ENCODE measurements at regions of chr9 and their contacts with region 1.

Region 1: DNA sequence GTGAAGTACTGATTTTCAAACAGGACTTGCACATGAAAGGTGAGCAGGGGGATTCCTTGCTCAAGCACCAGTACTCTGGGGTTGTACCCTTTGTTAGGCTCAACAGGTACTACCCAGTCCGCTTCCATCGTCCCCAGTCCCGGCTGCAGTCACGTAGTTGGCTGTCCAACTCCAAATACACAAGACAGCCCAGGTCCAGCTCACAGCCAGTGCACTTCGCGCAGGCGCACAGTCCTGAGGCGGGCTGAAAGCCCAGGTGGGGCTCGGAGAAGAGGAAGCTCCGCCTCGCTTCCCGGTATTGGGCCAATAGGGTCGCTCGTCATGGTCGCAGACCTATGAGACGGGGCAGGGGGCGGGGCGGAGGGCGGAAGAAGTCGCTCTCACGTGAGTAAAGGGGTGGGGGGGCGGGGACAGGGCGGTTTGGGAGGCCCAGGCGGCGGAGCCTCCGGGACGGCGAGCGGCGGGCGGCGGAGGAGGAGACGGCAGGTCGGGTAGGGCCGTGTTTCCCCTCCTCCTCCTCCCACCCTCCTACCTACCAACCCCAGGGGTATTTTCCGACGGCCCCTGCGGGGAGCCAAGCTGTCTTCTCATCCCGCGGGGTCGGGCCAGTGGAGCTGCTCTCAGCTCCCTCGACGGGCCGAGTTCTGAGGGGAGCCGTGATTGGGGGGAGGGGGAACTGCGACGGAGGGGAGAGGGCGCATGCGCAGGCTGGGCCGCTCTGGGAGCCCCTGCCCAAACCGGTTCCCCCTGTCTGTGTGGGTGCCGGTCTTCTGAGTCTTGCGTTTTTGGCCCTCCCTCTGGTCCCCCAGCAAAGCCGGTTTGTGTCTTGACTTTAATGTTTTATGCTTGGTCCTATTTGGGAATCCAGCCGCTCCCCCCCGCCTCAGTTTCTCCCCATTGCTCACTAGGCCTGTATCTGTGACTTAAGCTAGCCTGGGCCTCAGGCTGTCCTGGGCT is at the start of gene RABGAP1:
- DNase-seq: peak; percentile 94 to 99
- H3K4me3 ChIP-seq: peak within 1 kb of the TSS; percentile 89
- H3K27ac ChIP-seq: peak within 1 kb of the TSS; percentile 81
- H3K4me1 ChIP-seq: peaks cover 29% of the 10 kb centered on the region
- H3K27me3 ChIP-seq: no peaks in the 10 kb centered on the region
- CTCF ChIP-seq: no peak
- total RNA-seq, gene RABGAP1: 95.8 and 103 TPM in 2 replicates

Region 2: GRCh38 chr9:121902461-121903135 is 1038.3 kb before region 1 on chr9:
- CTCF ChIA-PET with region 1: no interaction called
- POLR2A ChIA-PET with region 1: no interaction called
- intact Hi-C with region 1: no loop called
- DNase-seq: no peak
- H3K4me3 ChIP-seq: no peak overlapping the region
- H3K27ac ChIP-seq: no peak overlapping the region
- H3K4me1 ChIP-seq: no peaks in the 10 kb centered on the region; the same call in 1 of the 2 replicates
- H3K27me3 ChIP-seq: no peaks in the 10 kb centered on the region
- CTCF ChIP-seq: no peak

Region 3: DNA sequence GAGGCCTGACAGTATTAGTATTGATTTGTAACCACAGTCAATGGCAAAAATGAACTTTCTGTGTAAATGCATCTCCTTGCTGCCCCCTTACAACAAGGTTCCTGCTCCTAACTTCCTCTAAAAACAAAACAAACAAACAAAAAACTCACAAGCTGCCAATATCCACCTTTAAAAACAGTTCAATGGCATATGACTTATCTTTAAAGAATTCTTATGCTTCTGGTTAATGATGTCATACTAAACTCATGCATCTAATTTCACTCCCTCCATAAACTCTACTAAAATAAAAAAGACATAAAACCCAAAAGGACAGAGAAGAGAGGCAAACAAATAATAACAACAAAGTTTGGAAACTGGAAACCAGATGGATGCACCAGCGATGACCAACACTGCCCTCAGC is 404.7 kb before region 1 on chr9:
- CTCF ChIA-PET with region 1: no interaction called
- POLR2A ChIA-PET with region 1: no interaction called
- intact Hi-C with region 1: no loop called
- DNase-seq: no peak
- H3K4me3 ChIP-seq: no peak overlapping the region
- H3K27ac ChIP-seq: no peak overlapping the region
- H3K4me1 ChIP-seq: no peaks in the 10 kb centered on the region
- H3K27me3 ChIP-seq: peaks cover 50% of the 10 kb centered on the region
- CTCF ChIP-seq: no peak

Region 4: DNA sequence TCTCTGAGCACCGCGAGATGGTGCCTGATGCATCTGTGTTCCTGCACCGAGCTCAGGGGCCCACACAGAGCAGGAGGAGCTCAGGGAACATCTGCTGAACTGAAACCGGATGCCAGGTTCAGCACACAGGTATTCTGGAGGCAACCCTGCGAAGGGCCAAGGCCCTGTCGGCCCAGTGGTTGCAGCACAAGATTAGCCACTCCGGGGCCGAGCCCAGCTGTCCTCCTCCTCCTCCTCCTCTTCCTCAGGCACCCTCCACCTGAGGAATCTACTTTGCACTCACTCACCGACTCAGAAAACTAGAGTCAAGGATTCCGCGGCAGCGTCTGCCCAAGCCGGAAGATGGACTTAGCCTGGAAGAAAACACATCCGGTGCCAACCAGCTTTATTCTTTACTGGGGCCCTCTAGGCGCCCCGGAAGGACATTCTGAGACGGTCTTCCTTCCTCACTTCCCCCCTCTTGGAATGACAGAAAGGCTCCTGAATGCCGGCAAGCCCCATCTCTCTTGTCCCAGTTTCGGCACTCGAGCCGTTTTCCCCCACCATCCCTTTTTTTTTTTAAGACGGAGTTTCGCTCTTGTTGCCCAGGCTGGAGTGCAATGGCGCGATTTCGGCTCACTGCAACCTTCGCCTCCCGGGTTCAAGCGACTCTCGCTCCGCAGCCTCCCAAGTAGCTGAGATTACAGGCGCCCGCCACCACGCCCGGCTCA is 27.8 kb before region 1 on chr9 and contains the start of gene ZBTB6:
- CTCF ChIA-PET with region 1: no interaction called
- POLR2A ChIA-PET with region 1: interaction called, 25 read pairs
- intact Hi-C with region 1: no loop called
- DNase-seq: peak; percentile 77 to 78
- H3K4me3 ChIP-seq: peak within 1 kb of the TSS; percentile 74
- H3K27ac ChIP-seq: peak within 1 kb of the TSS; percentile 76
- H3K4me1 ChIP-seq: peaks cover 11% of the 10 kb centered on the region
- H3K27me3 ChIP-seq: no peaks in the 10 kb centered on the region
- CTCF ChIP-seq: no peak
- total RNA-seq, gene ZBTB6: 7.7 and 8.7 TPM in 2 replicates

Region 5: GRCh38 chr9:122954253-122954691 is 13.4 kb after region 1 on chr9:
- CTCF ChIA-PET with region 1: no interaction called
- POLR2A ChIA-PET with region 1: interaction called, 11 read pairs
- intact Hi-C with region 1: loop called (anchors 2 kb)
- DNase-seq: peak in 1 of 2 experiments; percentile 85
- H3K4me3 ChIP-seq: no peak overlapping the region
- H3K27ac ChIP-seq: peak overlapping the region; percentile 57
- H3K4me1 ChIP-seq: peaks cover 26% of the 10 kb centered on the region
- H3K27me3 ChIP-seq: no peaks in the 10 kb centered on the region
- CTCF ChIP-seq: no peak

Region 6: GRCh38 chr9:123238365-123238764 is 297.5 kb after region 1 on chr9:
- CTCF ChIA-PET with region 1: interaction called, 15 read pairs
- POLR2A ChIA-PET with region 1: no interaction called
- intact Hi-C with region 1: no loop called
- DNase-seq: no peak
- H3K4me3 ChIP-seq: no peak overlapping the region
- H3K27ac ChIP-seq: no peak overlapping the region
- H3K4me1 ChIP-seq: no peaks in the 10 kb centered on the region
- H3K27me3 ChIP-seq: no peaks in the 10 kb centered on the region
- CTCF ChIP-seq: no peak